Activated CD4-positive, alpha-beta T cell treated with anti-CD3 and anti-CD28 coated beads, Interleukin-2, amount 10 ng/mL, durations not matched to agents 24 days and 14 days (primary cell): ENCODE measurements at regions of chr3 and their contacts with region 1.

Region 1: DNA sequence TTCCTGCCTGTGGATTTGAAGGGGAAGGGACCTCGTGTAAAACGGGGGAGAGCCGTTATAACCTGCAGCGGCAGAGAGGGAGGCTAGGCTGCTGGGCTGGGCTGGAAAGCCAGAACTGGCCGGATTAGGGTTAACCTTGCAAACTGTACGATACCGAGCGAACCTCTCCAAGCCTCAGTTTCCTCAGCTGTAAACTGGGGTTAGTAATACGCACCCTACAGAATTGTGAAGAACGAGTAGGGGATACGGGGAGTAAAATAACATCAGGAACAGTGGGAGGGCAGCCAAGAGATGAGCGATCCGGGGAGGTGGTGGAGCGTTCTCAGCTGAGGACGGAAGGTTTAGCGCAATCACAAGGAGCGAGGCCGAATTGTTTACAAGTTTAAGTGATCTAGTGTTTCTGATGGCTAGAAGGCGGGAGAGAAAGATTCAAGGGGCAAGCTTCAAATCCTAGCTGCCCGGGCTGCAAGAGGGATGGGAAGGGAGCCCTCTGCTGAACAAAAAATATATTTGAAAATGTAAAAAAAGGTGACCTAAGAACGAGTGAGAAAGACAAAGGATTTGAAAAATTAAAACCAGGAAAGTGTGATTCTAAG is 768 bp upstream of the SEMA5B start:
- DNase-seq: peak; percentile 72
- H3K4me3 Mint-ChIP-seq: peak overlapping the region; percentile 78
- H3K27ac Mint-ChIP-seq: no peak overlapping the region
- H3K4me1 Mint-ChIP-seq: peaks cover 15% of the 10 kb centered on the region
- H3K27me3 Mint-ChIP-seq: peaks cover 60% of the 10 kb centered on the region

Region 2: GRCh38 chr3:122392868-122393844 is 635.2 kb before region 1 on chr3:
- intact Hi-C with region 1: loop called (anchors 5 kb)
- DNase-seq: peak; percentile 72
- H3K4me3 Mint-ChIP-seq: no peak overlapping the region
- H3K27ac Mint-ChIP-seq: no peak overlapping the region
- H3K4me1 Mint-ChIP-seq: peaks cover 49% of the 10 kb centered on the region
- H3K27me3 Mint-ChIP-seq: no peaks in the 10 kb centered on the region

Region 3: DNA sequence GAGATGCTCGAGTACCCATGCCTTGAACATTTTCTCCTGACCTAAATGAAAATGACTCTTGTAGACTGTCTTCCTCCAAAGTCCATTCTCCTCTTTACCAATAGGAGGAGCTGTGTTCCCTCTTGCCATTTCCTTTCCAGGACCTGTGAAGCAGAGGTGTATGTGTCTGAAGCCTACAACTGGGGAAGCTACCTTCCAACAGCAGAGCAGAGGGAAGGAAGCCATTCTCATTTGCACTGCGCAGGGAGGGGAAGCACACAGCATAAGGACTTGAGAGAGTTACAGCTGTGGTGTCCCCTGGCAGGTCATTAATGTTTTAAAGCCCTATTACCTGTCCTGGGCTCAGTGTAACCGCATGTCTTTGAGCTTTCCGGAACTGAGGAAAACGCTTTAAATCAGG is 273.4 kb before region 1 on chr3:
- intact Hi-C with region 1: loop called (anchors 1 kb)
- DNase-seq: peak; percentile 78
- H3K4me3 Mint-ChIP-seq: no peak overlapping the region
- H3K27ac Mint-ChIP-seq: no peak overlapping the region
- H3K4me1 Mint-ChIP-seq: no peaks in the 10 kb centered on the region
- H3K27me3 Mint-ChIP-seq: no peaks in the 10 kb centered on the region

Region 4: GRCh38 chr3:122942937-122943827 is 85.1 kb before region 1 on chr3:
- intact Hi-C with region 1: loop called (anchors 1 kb)
- DNase-seq: peak; percentile 81
- H3K4me3 Mint-ChIP-seq: no peak overlapping the region
- H3K27ac Mint-ChIP-seq: no peak overlapping the region
- H3K4me1 Mint-ChIP-seq: no peaks in the 10 kb centered on the region
- H3K27me3 Mint-ChIP-seq: peaks cover 13% of the 10 kb centered on the region

Region 5: DNA sequence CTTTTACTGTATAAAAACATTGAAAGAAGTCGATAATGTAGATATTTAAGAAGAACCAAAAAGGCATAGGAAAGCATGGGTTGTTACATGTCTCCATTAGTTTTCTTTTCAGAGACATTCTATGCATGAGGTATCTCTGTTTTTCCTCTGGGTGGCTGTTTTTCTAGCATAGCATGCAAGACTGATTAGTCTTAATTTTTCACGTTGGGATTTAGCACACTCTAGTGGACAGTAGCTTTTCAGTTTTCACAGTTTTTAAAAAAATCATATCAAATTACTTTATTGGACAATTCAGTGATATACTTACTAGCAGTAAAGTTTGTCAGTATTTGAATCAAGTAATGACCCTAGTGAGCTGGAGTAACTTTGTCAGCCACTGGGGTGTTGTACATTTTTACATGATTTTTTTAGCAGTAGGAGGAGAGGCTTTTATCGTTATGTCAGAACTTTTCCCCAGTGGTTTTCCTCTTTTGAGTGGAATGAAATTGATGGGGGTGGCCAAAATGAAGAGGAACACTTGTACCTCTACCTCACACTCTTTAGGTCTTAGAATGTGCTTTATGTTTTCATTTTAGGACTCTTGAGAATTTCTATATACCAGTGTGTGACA is 230.6 kb after region 1 on chr3:
- intact Hi-C with region 1: loop called (anchors 5 kb)
- DNase-seq: no peak
- H3K4me3 Mint-ChIP-seq: no peak overlapping the region
- H3K27ac Mint-ChIP-seq: no peak overlapping the region
- H3K4me1 Mint-ChIP-seq: peaks cover 7% of the 10 kb centered on the region
- H3K27me3 Mint-ChIP-seq: no peaks in the 10 kb centered on the region

Region 6: GRCh38 chr3:123533554-123534159 is 505.3 kb after region 1 on chr3:
- intact Hi-C with region 1: no loop called
- DNase-seq: no peak
- H3K4me3 Mint-ChIP-seq: no peak overlapping the region
- H3K27ac Mint-ChIP-seq: no peak overlapping the region
- H3K4me1 Mint-ChIP-seq: peaks cover 6% of the 10 kb centered on the region
- H3K27me3 Mint-ChIP-seq: no peaks in the 10 kb centered on the region